ENCODE measurements at regions of chr21 and their contacts with region 1.

Region 1: DNA sequence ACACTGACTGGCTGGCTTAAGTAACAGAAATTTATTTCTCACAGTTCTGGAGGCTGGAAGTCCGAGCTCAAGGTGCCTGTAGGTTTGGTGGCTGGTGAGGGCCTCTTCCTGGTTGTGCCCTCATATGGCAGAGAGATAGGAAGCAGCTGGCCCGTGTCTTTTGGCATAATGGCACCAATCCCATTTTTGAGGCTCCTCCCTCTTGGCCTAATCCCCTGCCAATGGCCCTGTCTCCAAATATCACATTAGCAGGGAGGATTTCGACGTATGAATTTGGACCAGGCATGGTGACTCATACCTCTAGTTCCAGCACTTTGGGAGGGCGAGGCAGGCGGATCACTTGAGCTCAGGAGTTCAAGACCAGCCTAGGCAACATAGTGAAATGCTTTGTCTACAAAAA is 37.4 kb downstream of the AGPAT3 start:
- DNase-seq: peak in 2 of 5 donors; percentile 30 to 41
- H3K4me3 ChIP-seq: no peak overlapping the region
- H3K27ac ChIP-seq: no peak overlapping the region
- H3K4me1 ChIP-seq: peaks cover 6% of the 10 kb centered on the region
- H3K27me3 ChIP-seq: no peaks in the 10 kb centered on the region
- CTCF ChIP-seq: no peak
- EP300 ChIP-seq: no peak
- POLR2A ChIP-seq: no peak

Region 2: GRCh38 chr21:43574741-43575472 is 327.5 kb before region 1 on chr21:
- intact Hi-C with region 1: no loop called
- DNase-seq: peak; percentile 44 to 68 (median 54)
- H3K4me3 ChIP-seq: no peak overlapping the region
- H3K27ac ChIP-seq: peak overlapping the region; percentile 28 to 57
- H3K4me1 ChIP-seq: no peaks in the 10 kb centered on the region
- H3K27me3 ChIP-seq: no peaks in the 10 kb centered on the region
- CTCF ChIP-seq: no peak
- EP300 ChIP-seq: no peak
- POLR2A ChIP-seq: no peak

Region 3: DNA sequence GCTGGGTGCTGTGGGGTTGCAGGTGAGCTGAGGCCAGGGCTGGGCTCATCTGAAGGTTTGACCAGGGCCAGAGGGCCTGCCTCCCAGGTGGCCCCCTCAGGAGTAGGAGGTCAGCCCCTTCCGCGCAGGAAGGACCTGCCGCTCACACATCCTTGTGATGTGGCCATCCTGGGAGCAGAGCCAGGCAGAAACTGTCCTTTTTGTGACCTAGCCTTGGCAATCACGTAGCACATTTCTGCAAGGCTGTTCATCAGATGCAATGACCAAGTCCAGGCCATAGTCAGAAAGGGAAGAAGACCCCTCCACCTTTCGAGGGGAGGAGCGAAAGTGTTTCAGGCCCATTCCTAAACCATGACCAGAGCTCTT is 54.2 kb after region 1 on chr21:
- intact Hi-C with region 1: loop called in 1 of 4 experiments (anchors 10 kb)
- DNase-seq: no peak
- H3K4me3 ChIP-seq: no peak overlapping the region
- H3K27ac ChIP-seq: no peak overlapping the region
- H3K4me1 ChIP-seq: no peaks in the 10 kb centered on the region
- H3K27me3 ChIP-seq: no peaks in the 10 kb centered on the region
- CTCF ChIP-seq: no peak
- EP300 ChIP-seq: no peak
- POLR2A ChIP-seq: no peak

Measured in ovary (tissue), 10 donors.